ENCODE measurements at regions of chr16 and their contacts with region 1.

Region 1: GRCh38 chr16:30761928-30762810 is at the starts of genes CFAP119 and RNF40:
- DNase-seq: peak; percentile 95
- H3K4me3 Mint-ChIP-seq: peak within 1 kb of the TSS; percentile 93
- H3K27ac Mint-ChIP-seq: peak within 1 kb of the TSS; percentile 82
- H3K4me1 Mint-ChIP-seq: peaks cover 28% of the 10 kb centered on the region
- H3K27me3 Mint-ChIP-seq: no peaks in the 10 kb centered on the region
- total RNA-seq, gene CFAP119: 4.4 and 5.6 TPM in 2 replicates
- total RNA-seq, gene RNF40: 98.2 and 98.5 TPM in 2 replicates

Region 2: DNA sequence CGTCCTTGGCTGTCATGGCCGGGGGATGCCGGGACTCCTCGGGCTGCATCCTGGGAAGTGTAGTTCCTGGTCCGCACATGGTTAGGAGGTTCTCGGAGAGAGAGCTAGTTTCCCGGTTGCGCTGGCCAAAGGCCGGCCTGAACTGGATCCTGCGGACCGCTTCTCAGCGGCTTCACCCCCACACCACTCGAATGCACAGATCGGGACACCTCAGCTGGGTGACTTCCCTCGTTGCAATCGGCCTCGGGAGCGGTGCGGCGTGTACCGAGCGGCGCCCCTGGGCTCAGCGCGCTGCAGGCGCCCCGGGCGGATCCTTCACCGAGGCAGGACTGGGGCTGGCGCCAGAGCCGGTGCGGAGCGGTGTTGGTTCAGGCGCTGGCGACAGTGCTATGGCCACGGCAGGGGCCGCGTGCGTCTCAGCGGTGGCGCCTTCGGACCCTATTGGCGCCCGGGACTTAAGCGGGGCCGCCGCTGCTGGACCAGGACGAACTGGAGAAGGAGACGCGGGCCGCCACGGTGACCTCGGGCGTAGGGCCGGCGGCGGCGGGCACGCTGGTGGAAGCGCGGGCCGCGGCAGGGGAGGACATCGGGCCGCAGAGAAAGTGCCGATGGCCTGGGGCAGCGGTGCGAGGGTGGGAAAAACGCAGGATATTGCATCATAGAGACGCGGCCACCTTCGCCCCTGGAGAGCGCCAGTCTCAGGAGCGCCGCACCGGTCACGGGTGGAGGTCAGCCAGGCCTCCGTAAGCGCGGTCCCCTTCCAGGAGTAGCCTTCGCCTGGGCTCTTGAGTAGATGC is 13.4 kb after region 1 on chr16:
- intact Hi-C with region 1: loop called (anchors 1 kb)
- DNase-seq: peak; percentile 56
- H3K4me3 Mint-ChIP-seq: peak overlapping the region; percentile 94
- H3K27ac Mint-ChIP-seq: peak overlapping the region; percentile 96
- H3K4me1 Mint-ChIP-seq: peaks cover 20% of the 10 kb centered on the region
- H3K27me3 Mint-ChIP-seq: no peaks in the 10 kb centered on the region

Region 3: GRCh38 chr16:31084616-31085260 is 322.6 kb after region 1 on chr16:
- intact Hi-C with region 1: no loop called
- DNase-seq: no peak
- H3K4me3 Mint-ChIP-seq: no peak overlapping the region
- H3K27ac Mint-ChIP-seq: no peak overlapping the region
- H3K4me1 Mint-ChIP-seq: no peaks in the 10 kb centered on the region
- H3K27me3 Mint-ChIP-seq: no peaks in the 10 kb centered on the region

Measured in activated T-helper 1 cell treated with anti-CD3 and anti-CD28 coated beads, Interleukin-12 subunit alpha, Interleukin-12 subunit beta, Interleukin-2, Interleukin-4 antibody, amounts not matched to agents 30 ng/mL and 10 ng/mL and 1 ng/mL, durations not matched to agents 14 hours and 24 hours and 36 hours (primary cell).